Activated naive CD4-positive, alpha-beta T cell treated with anti-CD3 and anti-CD28 coated beads for 36 hours (primary cell): ENCODE measurements at regions of chr14 and their contacts with region 1.

Region 1: GRCh38 chr14:101707068-101707842 is 54.3 kb upstream of the PPP2R5C start:
- DNase-seq: peak; percentile 76
- H3K4me3 Mint-ChIP-seq: peak overlapping the region; percentile 49
- H3K27ac Mint-ChIP-seq: peak overlapping the region; percentile 78
- H3K4me1 Mint-ChIP-seq: peaks cover 27% of the 10 kb centered on the region
- H3K27me3 Mint-ChIP-seq: no peaks in the 10 kb centered on the region

Region 2: DNA sequence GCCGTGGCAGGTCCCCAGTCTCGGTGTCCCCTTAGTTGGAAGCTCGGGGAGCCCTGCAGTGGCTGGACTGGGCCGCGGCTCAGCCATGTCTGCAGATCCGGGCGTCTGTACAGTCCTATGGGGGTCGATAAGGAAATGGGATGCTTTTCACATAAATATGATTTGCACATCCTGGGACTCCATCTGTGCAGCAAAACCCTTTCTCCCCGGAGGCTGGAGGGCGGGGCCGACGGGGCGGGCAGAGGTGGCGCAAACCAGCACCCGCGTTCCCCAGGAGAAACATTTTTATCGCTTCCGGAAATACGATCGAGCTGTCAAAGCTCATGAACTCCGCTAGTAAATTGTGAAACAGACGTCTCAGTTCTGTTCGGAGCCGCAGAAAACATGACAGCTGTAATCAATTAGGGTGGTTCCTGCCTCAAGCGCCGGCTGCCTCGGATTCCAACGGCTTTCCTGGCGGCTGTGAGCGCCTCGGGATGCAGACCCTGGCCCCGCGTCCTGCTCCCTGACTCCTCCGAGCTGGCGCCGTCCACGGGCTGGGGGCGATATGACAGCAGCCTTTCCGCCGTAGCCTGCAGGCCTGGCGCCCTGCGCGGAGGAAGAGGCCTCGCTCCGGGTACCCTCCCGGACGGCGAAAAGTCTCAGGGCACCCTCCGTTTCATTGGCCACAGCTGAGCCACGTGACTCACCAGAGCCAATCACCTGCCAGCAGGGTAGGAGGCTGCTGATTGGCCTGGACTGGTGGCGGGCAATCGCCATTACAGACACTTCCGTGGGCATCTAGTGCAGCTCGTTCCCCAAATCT is 123.0 kb before region 1 on chr14:
- CTCF ChIA-PET with region 1: no interaction called
- intact Hi-C with region 1: no loop called
- DNase-seq: no peak
- H3K4me3 Mint-ChIP-seq: no peak overlapping the region
- H3K27ac Mint-ChIP-seq: no peak overlapping the region
- H3K4me1 Mint-ChIP-seq: no peaks in the 10 kb centered on the region
- H3K27me3 Mint-ChIP-seq: no peaks in the 10 kb centered on the region

Region 3: DNA sequence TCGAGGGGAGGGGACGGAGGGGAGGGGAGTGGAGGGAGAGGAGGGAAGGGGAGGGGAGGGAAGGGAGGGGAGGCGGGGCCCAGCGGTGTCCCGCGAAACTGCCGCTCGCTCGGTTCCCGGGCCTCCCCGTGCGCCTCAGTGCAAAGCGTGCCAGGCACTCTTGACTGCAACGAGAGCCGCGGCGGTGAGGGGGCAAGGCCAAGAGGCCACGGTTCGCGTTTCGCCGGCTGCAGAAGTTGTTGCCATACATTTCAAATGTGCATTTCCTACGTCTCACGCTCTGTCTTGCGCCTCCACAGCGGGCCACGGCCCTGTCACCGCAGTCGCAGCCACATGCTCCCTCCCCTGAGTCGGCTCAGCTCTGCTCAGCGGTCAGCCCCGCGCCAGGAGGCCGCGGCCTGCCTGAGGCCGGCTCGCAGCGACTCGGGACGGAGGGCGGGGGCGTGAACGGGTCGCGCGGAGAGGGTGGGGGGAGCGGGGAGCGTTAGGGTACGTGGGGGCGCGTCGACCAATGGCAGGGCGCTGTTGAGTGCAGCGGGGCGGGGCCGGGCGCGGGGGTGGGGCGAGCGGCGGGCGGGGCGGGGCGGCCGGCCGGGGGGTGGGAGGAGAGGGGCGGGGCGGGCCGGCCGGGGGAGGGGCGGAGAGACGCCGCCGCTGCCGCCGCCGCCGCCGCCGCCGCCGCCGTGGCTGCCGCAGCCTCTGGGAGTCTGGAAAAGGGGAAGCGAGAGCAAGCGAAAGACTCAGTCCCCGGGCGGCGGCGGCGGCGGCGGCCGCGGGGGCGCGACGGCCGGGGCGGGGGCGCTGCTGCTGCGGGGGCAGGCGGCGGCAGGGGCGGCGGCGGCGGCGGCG is 54.0 kb after region 1 on chr14 and contains the start of gene PPP2R5C:
- CTCF ChIA-PET with region 1: interaction called, 10 read pairs
- intact Hi-C with region 1: loop called (anchors 1 kb)
- DNase-seq: peak; percentile 85
- H3K4me3 Mint-ChIP-seq: peak within 1 kb of the TSS; percentile 91
- H3K27ac Mint-ChIP-seq: peak within 1 kb of the TSS; percentile 79
- H3K4me1 Mint-ChIP-seq: peaks cover 42% of the 10 kb centered on the region
- H3K27me3 Mint-ChIP-seq: no peaks in the 10 kb centered on the region
- total RNA-seq, gene PPP2R5C: 280 to 294 TPM

Region 4: GRCh38 chr14:101823511-101824120 is 116.4 kb after region 1 on chr14:
- CTCF ChIA-PET with region 1: interaction called, 3 read pairs
- intact Hi-C with region 1: loop called (anchors 1 kb)
- DNase-seq: peak; percentile 86
- H3K4me3 Mint-ChIP-seq: peak overlapping the region; percentile 70
- H3K27ac Mint-ChIP-seq: peak overlapping the region; percentile 98
- H3K4me1 Mint-ChIP-seq: peaks cover 86% of the 10 kb centered on the region
- H3K27me3 Mint-ChIP-seq: no peaks in the 10 kb centered on the region

Region 5: DNA sequence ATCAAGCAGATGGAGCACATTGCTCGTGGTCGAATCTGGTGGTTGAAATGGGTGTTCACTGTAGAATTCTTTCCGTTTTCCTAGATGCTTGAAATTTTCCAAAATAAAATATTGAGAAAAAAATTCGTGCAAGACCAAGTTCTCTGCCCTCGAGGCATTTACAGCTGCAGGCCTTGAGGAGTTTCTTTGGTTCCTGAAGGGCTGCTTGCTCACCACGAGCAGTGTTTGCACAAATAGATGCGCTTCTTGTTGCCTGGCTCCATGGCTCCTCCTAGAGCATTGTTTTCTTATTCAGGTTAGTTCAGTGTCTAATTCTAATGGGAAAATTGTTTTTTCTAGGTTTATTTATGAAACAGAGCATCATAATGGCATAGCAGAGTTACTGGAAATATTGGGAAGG is 182.6 kb after region 1 on chr14:
- CTCF ChIA-PET with region 1: interaction called, 6 read pairs
- intact Hi-C with region 1: loop called (anchors 5 kb)
- DNase-seq: no peak
- H3K4me3 Mint-ChIP-seq: no peak overlapping the region
- H3K27ac Mint-ChIP-seq: no peak overlapping the region
- H3K4me1 Mint-ChIP-seq: no peaks in the 10 kb centered on the region
- H3K27me3 Mint-ChIP-seq: no peaks in the 10 kb centered on the region

Region 6: DNA sequence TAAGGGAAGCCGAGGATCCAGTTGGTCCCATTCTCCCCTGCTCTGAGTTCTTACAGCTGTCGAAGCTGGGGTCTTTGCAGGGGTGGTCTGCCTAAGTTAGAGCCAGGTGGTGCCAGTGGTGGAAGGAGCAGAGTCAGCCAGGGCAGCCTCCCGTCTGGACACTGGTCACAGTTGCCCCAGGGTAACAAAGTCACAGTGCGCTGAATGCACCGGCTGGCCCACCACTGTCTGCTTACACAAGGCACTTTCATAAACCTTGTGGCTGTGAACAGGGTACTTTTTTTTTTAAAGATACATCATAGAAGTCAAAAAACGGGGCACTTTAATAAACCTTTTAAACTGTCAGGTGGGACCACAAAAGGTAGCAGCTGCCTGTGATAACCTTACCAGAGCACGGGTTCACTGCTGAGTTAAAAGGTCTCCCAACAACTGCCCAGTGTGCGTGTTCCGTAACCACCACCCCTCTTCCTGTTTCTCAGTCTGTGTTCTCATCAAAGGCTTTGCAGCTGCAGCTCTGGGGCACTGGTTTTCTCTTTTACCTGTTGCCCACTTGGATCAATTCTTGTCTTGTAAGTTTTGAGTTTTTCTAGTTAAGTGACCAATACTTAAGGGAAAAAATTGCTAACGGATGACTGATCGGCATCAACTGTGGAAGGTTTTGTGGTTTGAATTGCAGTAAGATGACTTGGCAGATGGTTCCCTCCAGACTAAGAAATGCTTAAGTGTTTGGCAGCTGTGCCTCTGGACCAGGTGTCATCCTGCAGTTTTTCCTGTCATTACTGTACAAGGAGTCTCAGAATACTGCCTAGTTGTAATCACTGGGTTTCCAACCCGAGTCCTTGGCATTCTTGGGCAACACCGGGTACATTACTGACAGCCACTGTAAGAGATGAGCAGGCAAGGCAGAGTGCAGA is 313.1 kb after region 1 on chr14:
- CTCF ChIA-PET with region 1: no interaction called
- intact Hi-C with region 1: loop called (anchors 10 kb)
- DNase-seq: peak; percentile 82
- H3K4me3 Mint-ChIP-seq: no peak overlapping the region
- H3K27ac Mint-ChIP-seq: peak overlapping the region; percentile 87
- H3K4me1 Mint-ChIP-seq: peaks cover 22% of the 10 kb centered on the region
- H3K27me3 Mint-ChIP-seq: no peaks in the 10 kb centered on the region

Region 7: DNA sequence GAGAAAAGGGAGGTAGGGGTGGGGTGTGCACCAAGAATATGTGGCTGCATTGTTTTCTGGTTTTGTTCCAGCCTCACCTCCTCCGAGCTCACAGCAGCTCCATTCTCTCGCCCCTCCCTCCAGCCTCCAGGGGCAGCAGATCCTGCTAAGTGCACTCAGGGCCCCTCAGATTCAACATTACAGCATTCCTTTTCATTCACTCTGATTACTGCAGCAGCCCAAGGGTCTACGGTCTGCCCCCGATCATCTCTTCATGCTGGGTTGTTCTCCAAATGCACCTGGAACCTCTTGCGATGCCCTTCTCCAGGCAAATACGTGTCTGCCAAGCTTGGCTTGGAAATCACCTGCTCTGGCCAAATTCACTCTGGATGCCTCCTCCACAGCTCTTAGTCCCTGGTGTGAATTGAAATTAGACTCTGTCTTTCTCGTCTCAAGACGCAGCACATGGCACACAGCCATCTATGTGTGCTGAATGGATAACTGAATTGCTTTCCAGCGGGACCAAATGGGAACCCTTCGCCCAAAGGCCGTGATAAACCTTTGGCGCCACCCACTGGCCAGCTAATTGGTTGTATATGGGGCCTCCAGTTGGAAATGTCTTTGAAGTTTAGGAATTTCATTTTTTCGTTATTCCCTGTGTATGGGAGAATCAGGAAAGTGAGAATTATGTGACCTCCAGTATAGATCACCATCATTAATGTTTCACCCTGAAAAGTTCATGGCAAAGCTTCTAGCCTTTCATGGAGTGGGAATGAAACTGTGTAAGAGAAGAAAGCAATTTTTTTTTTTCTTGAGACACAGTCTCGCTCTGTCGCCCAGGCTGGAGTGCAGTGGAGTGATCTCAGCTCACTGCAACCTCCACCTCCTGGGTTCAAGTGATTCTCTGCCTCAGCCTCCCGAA is 389.2 kb after region 1 on chr14:
- CTCF ChIA-PET with region 1: interaction called, 7 read pairs
- intact Hi-C with region 1: loop called (anchors 1 kb)
- DNase-seq: peak; percentile 83
- H3K4me3 Mint-ChIP-seq: no peak overlapping the region
- H3K27ac Mint-ChIP-seq: no peak overlapping the region
- H3K4me1 Mint-ChIP-seq: peaks cover 15% of the 10 kb centered on the region
- H3K27me3 Mint-ChIP-seq: no peaks in the 10 kb centered on the region